Dendritic cell treated with granulocyte-macrophage colony-stimulating factor and Interleukin-4, amounts not matched to agents 40 ng/mL and 50 ng/mL, for 4 days (primary cell): ENCODE measurements at regions of chr1 and their contacts with region 1.

Region 1: GRCh38 chr1:109532365-109533136 is 7.1 kb upstream of the GPR61 start:
- H3K4me3 Mint-ChIP-seq: peak overlapping the region; percentile 33
- H3K27ac Mint-ChIP-seq: peak overlapping the region; percentile 28
- H3K4me1 Mint-ChIP-seq: peaks cover 17% of the 10 kb centered on the region
- H3K27me3 Mint-ChIP-seq: no peaks in the 10 kb centered on the region

Region 2: DNA sequence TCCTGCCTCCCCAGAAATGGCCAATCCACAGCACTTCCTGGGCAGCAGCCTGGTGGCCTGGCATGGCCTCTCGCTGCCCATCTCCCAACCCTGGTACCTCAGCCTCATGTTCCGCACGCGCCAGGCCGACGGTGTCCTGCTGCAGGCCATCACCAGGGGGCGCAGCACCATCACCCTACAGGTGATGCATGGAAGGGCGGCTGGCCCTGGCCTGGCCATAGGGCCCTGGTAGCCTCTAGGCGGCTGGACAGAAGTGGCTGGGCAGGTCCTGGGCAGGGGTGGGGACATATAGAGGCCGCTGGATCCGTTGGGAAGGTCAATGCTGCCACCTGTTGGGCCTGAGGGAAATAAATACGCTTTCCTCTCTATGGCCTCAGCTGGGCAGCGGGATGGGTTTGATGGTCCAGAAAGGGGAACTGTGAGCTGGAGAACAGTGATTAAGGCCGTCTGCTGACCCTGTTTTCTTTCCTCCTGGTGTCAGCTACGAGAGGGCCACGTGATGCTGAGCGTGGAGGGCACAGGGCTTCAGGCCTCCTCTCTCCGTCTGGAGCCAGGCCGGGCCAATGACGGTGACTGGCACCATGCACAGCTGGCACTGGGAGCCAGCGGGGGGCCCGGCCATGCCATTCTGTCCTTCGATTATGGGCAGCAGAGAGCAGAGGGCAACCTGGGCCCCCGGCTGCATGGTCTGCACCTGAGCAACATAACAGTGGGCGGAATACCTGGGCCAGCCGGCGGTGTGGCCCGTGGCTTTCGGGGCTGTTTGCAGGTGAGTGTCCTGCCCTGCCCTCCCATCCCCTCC is 268.8 kb before region 1 on chr1:
- intact Hi-C with region 1: loop called (anchors 10 kb)
- H3K4me3 Mint-ChIP-seq: no peak overlapping the region
- H3K27ac Mint-ChIP-seq: no peak overlapping the region
- H3K4me1 Mint-ChIP-seq: peaks cover 11% of the 10 kb centered on the region
- H3K27me3 Mint-ChIP-seq: peaks cover 15% of the 10 kb centered on the region

Region 3: GRCh38 chr1:109426278-109427170 is 106.0 kb before region 1 on chr1 and contains the start of gene PSMA5:
- intact Hi-C with region 1: loop called (anchors 5 kb)
- H3K4me3 Mint-ChIP-seq: peak within 1 kb of the TSS; percentile 95
- H3K27ac Mint-ChIP-seq: peak within 1 kb of the TSS; percentile 95
- H3K4me1 Mint-ChIP-seq: peaks cover 37% of the 10 kb centered on the region
- H3K27me3 Mint-ChIP-seq: peaks cover 1% of the 10 kb centered on the region

Region 4: DNA sequence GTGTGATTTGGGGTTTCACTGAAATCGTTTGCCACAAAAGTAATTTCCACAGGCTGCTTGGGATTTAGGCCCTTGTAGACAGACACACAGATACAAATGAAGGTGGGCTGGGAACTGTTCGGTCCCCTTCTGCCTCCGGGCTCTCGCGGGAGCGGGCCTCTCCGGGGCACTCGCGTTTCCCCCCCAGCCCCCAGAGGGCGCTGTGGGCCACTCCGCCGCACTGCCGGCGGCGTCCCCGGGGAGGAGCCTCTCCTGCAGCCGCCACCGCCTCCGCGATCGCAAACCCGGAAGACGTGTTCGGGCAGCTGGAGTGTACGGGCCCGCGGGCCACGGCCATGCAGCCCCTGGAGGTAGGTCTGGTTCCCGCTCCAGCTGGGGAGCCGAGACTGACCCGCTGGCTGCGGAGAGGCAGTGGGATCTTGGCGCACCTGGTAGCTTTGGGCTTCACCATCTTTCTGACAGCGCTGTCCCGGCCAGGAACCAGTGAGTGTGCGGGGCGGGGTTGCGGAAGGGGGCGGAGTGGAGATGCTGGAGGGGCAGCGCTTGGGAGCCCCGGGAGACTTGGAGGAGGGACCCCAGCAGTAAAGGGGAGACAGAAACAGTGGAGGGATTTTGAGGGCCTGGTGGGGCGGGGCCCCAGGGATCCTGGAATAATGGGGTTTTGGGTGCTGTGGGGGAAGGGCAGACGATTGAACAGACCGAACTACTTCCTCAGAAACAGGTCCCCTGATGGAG is 38.6 kb before region 1 on chr1 and contains the start of gene CYB561D1:
- intact Hi-C with region 1: loop called (anchors 1 kb)
- H3K4me3 Mint-ChIP-seq: peak within 1 kb of the TSS; percentile 96
- H3K27ac Mint-ChIP-seq: peak within 1 kb of the TSS; percentile 91
- H3K4me1 Mint-ChIP-seq: peaks cover 47% of the 10 kb centered on the region
- H3K27me3 Mint-ChIP-seq: no peaks in the 10 kb centered on the region

Region 5: DNA sequence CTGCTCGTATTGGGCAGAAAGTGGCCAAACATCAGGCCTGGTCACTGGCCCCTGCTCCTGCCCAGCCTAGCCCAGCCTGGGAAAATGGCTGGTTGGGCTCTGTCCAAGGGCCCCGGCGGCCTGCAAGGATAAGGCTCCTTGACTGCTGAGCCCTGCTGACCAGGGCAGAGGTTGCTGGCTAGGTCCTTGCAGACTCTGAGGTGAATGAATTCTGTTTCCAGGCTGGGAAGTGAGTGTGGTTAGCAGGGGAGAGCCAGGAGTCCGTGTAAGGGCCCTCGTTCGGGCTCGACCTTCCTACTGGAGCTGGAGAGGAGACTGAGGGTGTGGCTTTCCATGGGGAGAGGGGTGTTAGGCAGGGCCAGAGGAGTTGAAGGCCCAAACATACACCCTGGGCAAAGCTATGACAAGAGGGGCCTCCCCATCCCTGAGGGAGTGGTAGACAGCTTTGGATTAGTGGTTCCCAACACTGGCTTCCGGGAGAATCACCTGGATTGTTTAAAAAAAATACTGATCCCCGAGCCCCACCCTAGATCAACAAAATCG is 398.7 kb after region 1 on chr1:
- intact Hi-C with region 1: no loop called
- H3K4me3 Mint-ChIP-seq: no peak overlapping the region
- H3K27ac Mint-ChIP-seq: no peak overlapping the region
- H3K4me1 Mint-ChIP-seq: peaks cover 29% of the 10 kb centered on the region
- H3K27me3 Mint-ChIP-seq: peaks cover 15% of the 10 kb centered on the region